ENCODE measurements at regions of chr6 and their contacts with region 1.

Region 1: GRCh38 chr6:146913842-146914488 is 290.3 kb upstream of the STXBP5 start:
- DNase-seq: peak; percentile 82
- ATAC-seq: peak; percentile 81
- H3K4me3 ChIP-seq: peak overlapping the region; percentile 32 to 45
- H3K27ac ChIP-seq: peak overlapping the region; percentile 83
- H3K4me1 ChIP-seq: peaks cover 26 to 37% of the 10 kb centered on the region in 2 experiments
- H3K27me3 ChIP-seq: no peaks in the 10 kb centered on the region
- CTCF ChIP-seq: no peak
- POLR2A ChIP-seq: no peak
- RAD21 ChIP-seq: no peak; the same call in 1 of the 2 replicates

Region 2: GRCh38 chr6:147202516-147203312 is 288.7 kb after region 1 on chr6:
- CTCF ChIA-PET with region 1: no interaction called
- POLR2A ChIA-PET with region 1: no interaction called
- RAD21 ChIA-PET with region 1: no interaction called
- intact Hi-C with region 1: loop called (anchors 1 kb)
- DNase-seq: peak; percentile 95
- ATAC-seq: peak; percentile 84
- H3K4me3 ChIP-seq: peak overlapping the region; percentile 72 to 73
- H3K27ac ChIP-seq: peak overlapping the region; percentile 81
- H3K4me1 ChIP-seq: peaks cover 3 to 12% of the 10 kb centered on the region in 2 experiments; a peak in 3 of 4 replicates
- H3K27me3 ChIP-seq: no peaks in the 10 kb centered on the region
- CTCF ChIP-seq: no peak
- POLR2A ChIP-seq: peak; percentile 83
- RAD21 ChIP-seq: no peak

Region 3: DNA sequence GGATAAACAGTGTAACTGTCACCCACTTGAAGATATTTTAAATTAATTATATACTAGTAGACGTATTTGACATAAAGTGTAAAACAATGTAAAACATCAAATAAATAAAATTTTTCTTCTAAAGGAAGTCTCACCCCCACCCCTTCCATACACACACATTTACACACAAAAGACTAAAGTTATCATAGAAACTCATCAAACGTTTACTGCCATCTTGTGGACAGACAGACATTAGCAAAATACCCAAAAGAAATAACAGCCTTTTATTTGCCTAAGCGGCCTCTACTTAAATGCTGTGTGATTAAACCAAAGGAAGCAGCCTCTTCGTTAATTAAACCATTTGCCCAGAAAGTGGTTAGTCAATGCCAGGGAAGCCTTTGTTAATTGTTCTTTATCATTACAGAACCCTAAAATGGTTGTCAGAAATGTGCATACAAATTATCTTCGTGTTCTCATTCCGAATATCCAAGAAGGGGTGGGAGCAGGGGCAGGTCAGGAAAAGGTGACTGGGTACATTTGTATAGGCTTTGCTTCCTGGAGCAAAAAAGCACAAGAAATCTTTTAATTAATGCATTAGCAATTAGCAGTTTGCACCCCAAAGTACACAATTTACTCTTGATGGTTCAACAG is 1252.5 kb after region 1 on chr6:
- CTCF ChIA-PET with region 1: no interaction called
- POLR2A ChIA-PET with region 1: no interaction called
- RAD21 ChIA-PET with region 1: no interaction called
- intact Hi-C with region 1: loop called (anchors 10 kb)
- DNase-seq: peak; percentile 51
- ATAC-seq: peak; percentile 72
- H3K4me3 ChIP-seq: no peak overlapping the region
- H3K27ac ChIP-seq: no peak overlapping the region
- H3K4me1 ChIP-seq: no peaks in the 10 kb centered on the region
- H3K27me3 ChIP-seq: no peaks in the 10 kb centered on the region
- CTCF ChIP-seq: peak; percentile 52 to 79 (median 70)
- POLR2A ChIP-seq: no peak
- RAD21 ChIP-seq: peak; percentile 88

Measured in HCT116 (cell line).